Left colon (tissue), 2 donors: ENCODE measurements at regions of chr20 and their contacts with region 1.

Region 1: DNA sequence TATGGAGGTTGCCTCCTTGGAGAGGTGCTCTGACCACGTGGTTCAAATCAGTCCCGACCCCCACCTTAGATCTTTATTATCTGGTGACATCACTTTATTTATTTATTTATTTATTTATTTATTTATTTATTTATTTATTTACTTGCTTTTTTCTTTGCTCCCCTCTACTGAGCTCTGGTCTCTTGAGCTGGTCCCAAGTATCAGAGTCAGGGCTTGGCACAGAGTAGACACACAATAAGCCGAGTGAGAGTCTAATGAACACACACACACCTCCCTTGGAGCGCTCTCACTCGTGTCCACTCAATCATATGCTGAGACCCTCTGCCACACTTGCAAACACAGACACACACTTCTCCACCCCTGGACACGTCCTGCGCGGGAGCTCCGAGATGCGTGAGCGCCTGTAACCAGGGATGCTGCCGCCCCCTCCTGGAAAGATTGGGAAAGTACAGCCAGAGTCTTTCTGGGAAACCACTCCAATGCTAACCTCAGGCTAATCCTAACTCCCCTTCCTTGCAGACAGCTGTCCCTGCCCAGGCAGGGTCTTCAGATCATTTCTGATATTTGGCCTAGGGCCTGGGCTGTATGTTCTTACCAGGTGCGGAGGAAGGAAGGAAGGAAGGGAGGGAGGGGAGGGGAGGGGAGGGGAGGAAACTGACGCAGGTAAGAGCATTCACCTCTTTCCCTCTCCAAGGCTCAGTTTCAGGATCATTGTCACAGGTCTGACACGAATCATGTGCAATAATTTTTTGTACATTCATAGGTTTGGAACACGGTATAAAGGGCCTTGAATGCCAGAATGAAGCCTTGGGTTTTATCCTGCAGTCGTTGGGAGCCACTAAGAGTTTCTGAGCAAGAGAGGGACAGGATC is 70.9 kb downstream of the STK35 start:
- DNase-seq: peak; percentile 45 to 70
- ATAC-seq: peak; percentile 75

Region 2: GRCh38 chr20:1764136-1765033 is 408.2 kb before region 1 on chr20:
- intact Hi-C with region 1: loop called in 1 of 2 experiments (anchors 10 kb)
- DNase-seq: peak; percentile 55 to 83
- ATAC-seq: peak; percentile 95

Region 3: GRCh38 chr20:1965520-1966351 is 206.8 kb before region 1 on chr20:
- intact Hi-C with region 1: loop called (anchors 5 kb)
- DNase-seq: peak; percentile 52 to 82
- ATAC-seq: peak; percentile 69

Region 4: DNA sequence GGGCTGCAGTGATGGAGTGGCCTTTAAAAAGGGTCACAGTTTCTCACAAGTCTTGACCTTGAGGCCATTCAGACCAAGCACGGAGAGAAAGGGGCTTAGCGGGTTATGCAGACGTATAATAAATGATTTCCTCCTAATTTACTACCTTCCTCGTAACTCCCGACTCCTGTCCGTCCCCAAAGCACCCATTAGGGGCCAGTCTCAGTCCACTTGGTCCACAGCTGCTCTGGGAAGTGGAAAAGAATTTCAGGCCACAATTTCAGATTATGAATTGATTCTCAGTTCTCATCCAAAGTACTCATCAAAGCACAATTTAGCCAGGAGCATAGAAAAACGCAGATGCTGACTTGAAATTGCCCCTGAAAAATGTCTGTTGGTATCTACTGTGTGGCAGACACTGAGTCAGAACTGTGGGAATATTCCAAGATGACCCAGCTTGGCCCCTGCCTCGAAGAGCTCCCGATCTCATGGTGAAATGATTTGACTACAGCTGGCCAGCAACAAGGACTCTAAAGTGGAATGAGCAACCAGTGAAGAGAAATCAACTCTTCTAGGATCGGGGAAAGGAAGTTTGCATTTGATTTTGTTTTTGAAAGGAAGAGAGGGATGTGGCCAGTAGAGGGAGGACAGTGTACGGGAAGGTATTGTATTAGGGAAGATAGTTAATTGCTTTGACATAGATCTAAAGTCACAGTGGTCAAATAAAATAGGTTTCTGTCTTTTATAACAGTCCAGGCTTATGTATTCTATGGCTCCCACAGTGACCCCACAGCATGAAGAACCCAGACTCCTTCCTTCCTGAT is 86.2 kb before region 1 on chr20:
- intact Hi-C with region 1: loop called in 1 of 2 experiments (anchors 10 kb)
- DNase-seq: no peak
- ATAC-seq: no peak

Region 5: DNA sequence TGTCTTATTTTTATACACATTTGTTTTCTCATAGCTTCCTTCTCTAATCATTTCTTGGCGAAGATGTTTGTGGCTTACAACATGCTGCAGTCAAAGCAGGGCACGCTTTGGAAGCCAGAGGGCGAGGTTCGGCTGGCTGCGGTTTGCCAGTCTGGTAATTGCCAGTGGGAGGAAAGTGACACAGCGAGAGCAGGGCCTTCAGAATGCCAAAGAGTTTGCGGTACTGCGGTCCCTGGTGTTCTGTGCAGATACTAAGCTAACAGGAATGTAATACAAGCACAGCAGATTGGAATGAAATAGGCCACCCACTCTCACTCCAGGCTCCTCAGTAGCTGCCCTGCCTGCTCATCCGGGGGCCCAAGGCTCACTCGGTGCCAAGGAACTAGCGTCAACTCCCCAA is 64.5 kb after region 1 on chr20:
- intact Hi-C with region 1: no loop called
- DNase-seq: peak in 1 of 2 donors; percentile 47
- ATAC-seq: peak; percentile 81

Region 6: DNA sequence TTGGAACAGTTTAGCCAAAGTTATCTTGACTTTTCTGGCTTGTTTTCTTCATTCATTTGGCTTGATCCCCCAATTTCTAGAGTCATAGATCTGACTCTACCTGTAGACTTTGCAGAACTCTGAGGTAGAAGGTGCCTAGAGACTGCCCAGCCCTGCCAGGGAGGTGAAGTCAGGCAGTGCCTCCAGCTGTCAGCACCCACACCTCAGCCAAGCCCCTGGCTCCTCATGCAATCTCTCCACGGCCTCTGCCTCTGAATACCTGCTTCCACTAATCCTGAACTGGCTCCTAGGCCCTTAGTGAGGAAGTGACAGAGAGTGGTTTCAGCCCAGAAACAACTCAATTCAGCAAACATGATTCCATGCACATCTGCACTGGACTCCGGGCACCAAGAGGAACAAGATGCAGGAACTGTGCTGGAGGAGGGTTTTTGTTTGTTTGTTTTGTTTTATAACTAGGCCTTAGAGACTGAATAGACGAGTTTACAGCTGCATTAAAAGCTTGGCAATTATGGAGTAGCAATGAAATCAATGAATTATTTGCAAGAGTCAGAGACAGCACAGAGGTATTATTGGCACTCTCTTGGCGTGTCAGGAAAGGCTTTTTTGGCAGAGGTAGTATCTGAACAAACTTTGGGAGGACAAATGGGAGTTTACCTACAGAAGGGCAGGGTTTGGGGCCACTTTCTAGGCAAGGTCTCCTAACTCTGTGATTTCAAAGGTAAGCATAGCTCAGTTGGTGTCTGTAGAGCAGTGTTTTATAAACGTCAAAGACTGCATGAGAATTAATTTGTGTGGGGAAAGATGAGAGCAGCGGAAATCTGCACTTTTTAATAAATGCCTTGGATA is 148.5 kb after region 1 on chr20:
- intact Hi-C with region 1: no loop called
- DNase-seq: no peak
- ATAC-seq: peak; percentile 69